HepG2 (cell line): ENCODE measurements at regions of chr1 and their contacts with region 1.

Region 1: DNA sequence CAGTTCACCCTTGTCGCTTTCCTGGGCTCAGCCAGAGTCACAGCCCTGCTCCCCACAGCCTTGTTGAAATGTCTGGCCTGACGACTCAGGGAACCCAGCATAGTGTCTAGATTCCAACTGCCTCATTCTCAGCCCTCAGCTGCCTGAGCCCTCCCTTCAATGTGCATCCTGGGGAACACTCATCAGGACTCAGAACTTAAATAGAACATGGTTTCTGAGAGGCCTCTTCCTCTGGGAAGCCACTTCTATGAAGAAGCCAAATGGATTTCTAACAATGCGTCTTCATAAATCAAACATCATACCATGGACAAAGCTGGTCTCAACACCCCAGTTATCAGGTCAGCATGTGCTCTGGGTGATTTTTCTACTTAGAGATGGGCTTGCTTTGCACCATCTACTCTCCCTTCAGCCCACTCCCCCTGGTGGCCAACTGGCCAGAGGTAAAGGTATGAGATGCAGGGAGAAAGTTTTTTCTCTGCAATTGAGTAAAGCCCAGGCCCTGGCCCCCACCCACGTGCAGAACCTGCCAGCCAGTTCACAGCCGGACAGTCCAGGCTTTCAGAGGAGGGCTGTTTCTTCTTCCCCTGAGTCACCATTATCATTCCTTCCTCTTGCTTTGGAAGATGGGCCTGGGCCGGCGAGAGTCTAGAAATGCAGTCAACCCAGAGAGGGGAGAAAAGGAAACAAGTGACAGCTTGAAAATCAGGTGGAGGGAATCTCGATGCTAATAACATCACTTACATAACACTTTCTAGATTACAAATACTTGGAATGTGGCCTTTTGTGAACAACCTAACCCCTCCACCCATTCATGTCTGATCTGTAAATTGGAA is 32.1 kb downstream of the CD244 start:
- DNase-seq: peak; percentile 40
- ATAC-seq: peak; percentile 93
- H3K4me3 ChIP-seq: no peak overlapping the region
- H3K27ac ChIP-seq: no peak overlapping the region
- H3K4me1 ChIP-seq: no peaks in the 10 kb centered on the region
- H3K27me3 ChIP-seq: no peaks in the 10 kb centered on the region
- CTCF ChIP-seq: peak; percentile 63
- EP300 ChIP-seq: no peak
- POLR2A ChIP-seq: no peak
- RAD21 ChIP-seq: peak; percentile 34; the same call in 1 of the 2 replicates

Region 2: DNA sequence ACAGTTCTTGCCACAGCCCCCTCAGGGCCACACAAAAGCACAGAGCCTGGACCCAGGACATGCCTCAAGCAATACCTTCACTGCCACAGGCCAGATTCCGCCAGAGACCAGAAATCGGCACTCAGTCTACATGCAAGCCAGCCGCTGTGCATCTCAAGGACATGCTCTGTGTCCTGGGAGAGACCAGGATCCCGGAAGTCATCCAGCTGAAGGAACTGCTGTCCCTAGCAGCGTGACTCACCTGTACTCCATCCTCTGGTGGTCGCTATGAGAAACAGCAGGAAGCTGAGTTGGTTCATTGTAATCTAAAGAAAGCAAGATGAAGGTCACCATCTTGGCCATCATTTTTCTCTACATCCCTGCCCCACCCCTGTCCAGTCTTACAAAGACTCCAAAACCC is 54.0 kb after region 1 on chr1:
- CTCF ChIA-PET with region 1: interaction called, 3 read pairs
- POLR2A ChIA-PET with region 1: no interaction called
- in situ Hi-C with region 1: loop called (anchors 10 kb)
- intact Hi-C with region 1: loop called (anchors 2 kb)
- DNase-seq: peak; percentile 15
- ATAC-seq: peak; percentile 85
- H3K4me3 ChIP-seq: no peak overlapping the region
- H3K27ac ChIP-seq: no peak overlapping the region
- H3K4me1 ChIP-seq: no peaks in the 10 kb centered on the region
- H3K27me3 ChIP-seq: no peaks in the 10 kb centered on the region; a peak in 2 of 5 replicates
- CTCF ChIP-seq: peak; percentile 47
- EP300 ChIP-seq: no peak
- POLR2A ChIP-seq: no peak
- RAD21 ChIP-seq: no peak